Activated naive CD4-positive, alpha-beta T cell treated with anti-CD3 and anti-CD28 coated beads, Interleukin-2, amount 10 ng/mL, durations not matched to agents 7 days and 5 days (primary cell): ENCODE measurements at regions of chr5 and their contacts with region 1.

Region 1: GRCh38 chr5:10353241-10354047 is at the start of gene MARCHF6:
- DNase-seq: peak; percentile 96
- H3K4me3 Mint-ChIP-seq: peak within 1 kb of the TSS; percentile 99
- H3K27ac Mint-ChIP-seq: peak within 1 kb of the TSS; percentile 98
- H3K4me1 Mint-ChIP-seq: peaks cover 45% of the 10 kb centered on the region
- H3K27me3 Mint-ChIP-seq: no peaks in the 10 kb centered on the region

Region 2: DNA sequence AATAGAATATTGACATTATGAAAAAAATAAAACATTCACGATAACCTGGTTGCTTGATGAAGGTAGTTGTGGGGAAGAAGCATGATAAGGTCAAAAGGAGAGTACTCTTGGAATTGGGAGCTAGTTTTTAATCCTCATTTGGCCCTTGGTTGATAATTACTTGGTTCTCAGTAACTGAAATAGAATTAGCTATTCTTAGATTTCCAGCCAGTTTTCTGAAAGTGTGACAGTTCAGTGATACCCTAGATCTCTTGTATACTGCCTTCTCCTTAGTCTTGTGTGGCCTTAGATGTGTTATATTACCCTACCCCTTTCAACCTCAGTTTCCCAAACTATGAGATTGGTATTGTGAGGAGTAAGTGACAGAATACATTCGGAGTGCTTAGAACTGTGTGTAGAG is 17.5 kb after region 1 on chr5:
- CTCF ChIA-PET with region 1: interaction called, 11 read pairs
- DNase-seq: no peak
- H3K4me3 Mint-ChIP-seq: no peak overlapping the region
- H3K27ac Mint-ChIP-seq: no peak overlapping the region
- H3K4me1 Mint-ChIP-seq: peaks cover 31% of the 10 kb centered on the region
- H3K27me3 Mint-ChIP-seq: no peaks in the 10 kb centered on the region